ENCODE measurements at regions of chr10 and their contacts with region 1.

Region 1: DNA sequence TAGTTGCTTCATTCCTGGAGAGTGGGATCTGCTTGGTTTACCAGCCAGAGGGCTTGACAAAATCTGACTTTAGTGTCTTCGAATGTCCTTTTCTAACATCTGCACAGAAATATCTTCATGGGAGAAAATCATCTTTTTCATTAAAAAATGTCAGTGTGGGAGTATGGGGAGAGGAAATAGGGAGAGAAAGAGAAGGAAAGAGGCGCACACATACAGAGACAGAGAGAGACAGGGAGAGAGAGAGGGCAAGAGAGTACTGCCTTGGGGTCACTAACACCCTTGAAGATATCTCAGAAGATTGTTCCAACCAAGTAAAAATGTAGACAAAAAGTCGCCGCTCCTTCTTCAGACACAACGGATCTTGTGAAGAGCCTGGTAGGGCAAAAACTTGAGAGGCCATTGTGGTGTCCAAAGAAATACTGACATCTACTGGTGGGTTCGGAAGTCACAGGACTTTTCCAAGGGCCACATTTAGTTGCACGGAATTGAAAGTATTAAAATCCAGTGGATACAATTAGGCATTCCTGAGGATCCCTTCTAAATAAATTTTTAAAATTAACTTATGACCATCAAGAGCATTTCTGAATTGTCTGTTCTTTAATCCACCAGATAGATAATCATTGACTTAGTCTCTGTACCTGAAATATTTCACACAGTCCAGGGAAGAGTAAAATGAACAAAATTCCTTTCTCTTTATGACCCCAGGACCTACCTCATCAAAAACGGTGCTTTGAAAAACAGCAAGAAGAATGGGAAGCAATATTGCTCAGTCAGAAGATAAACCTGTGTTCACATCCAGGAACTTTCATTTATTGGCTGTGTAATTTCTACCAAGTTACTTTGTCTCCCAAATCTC is 29.7 kb downstream of the VIM start:
- DNase-seq: peak in 11 of 14 experiments; percentile 7 to 84 (median 38)
- ATAC-seq: peak; percentile 78
- H3K4me3 ChIP-seq: no peak overlapping the region
- H3K4me3 Mint-ChIP-seq: no peak overlapping the region
- H3K27ac ChIP-seq: no peak overlapping the region
- H3K27ac Mint-ChIP-seq: no peak overlapping the region
- H3K4me1 ChIP-seq: peaks cover 2% of the 10 kb centered on the region
- H3K4me1 Mint-ChIP-seq: peaks cover 7% of the 10 kb centered on the region
- H3K27me3 ChIP-seq: no peaks in the 10 kb centered on the region
- H3K27me3 Mint-ChIP-seq: no peaks in the 10 kb centered on the region
- CTCF ChIP-seq: peak; percentile 84

Region 2: DNA sequence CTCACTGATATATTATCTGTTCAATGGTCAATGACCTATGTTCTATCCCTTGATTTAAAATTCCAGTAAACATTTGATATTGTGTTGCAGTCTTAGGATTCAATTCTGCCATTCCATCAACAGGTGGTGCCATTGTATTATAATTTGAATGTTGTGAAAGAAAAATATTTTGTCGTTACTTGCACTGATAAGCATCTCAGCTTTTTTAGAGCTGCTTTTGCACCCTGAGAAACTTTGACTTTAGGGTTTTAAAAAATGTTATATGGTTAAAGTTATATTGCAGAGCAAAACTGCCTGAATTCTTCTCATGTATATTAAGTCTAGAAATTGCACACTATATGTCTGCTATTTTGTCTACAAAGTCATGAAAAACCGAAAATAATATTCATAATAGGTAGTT is 1378.6 kb before region 1 on chr10:
- CTCF ChIA-PET with region 1: no interaction called
- POLR2A ChIA-PET with region 1: no interaction called
- intact Hi-C with region 1: loop called in 1 of 2 experiments (anchors 10 kb)
- DNase-seq: peak in 3 of 14 experiments; percentile 43 to 47 (median 44)
- ATAC-seq: peak; percentile 61
- H3K4me3 ChIP-seq: no peak overlapping the region
- H3K4me3 Mint-ChIP-seq: no peak overlapping the region
- H3K27ac ChIP-seq: no peak overlapping the region
- H3K27ac Mint-ChIP-seq: no peak overlapping the region
- H3K4me1 ChIP-seq: no peaks in the 10 kb centered on the region
- H3K4me1 Mint-ChIP-seq: no peaks in the 10 kb centered on the region
- H3K27me3 ChIP-seq: peaks cover 0 to 12% of the 10 kb centered on the region in 2 experiments
- H3K27me3 Mint-ChIP-seq: peaks cover 79% of the 10 kb centered on the region
- CTCF ChIP-seq: peak; percentile 60

Region 3: GRCh38 chr10:16828114-16828568 is 429.6 kb before region 1 on chr10:
- CTCF ChIA-PET with region 1: interaction called, 5 read pairs
- POLR2A ChIA-PET with region 1: no interaction called
- intact Hi-C with region 1: loop called (anchors 1 kb)
- DNase-seq: peak; percentile 30 to 88 (median 51)
- ATAC-seq: peak; percentile 99
- H3K4me3 ChIP-seq: no peak overlapping the region
- H3K4me3 Mint-ChIP-seq: no peak overlapping the region
- H3K27ac ChIP-seq: no peak overlapping the region
- H3K27ac Mint-ChIP-seq: no peak overlapping the region
- H3K4me1 ChIP-seq: peaks cover 8% of the 10 kb centered on the region
- H3K4me1 Mint-ChIP-seq: peaks cover 7% of the 10 kb centered on the region
- H3K27me3 ChIP-seq: no peaks in the 10 kb centered on the region
- H3K27me3 Mint-ChIP-seq: no peaks in the 10 kb centered on the region
- CTCF ChIP-seq: peak; percentile 63

Region 4: GRCh38 chr10:16909961-16910792 is 347.5 kb before region 1 on chr10:
- CTCF ChIA-PET with region 1: interaction called, 3 read pairs
- POLR2A ChIA-PET with region 1: no interaction called
- intact Hi-C with region 1: loop called in 1 of 2 experiments (anchors 5 kb)
- DNase-seq: peak in 1 of 14 experiments; percentile 7
- ATAC-seq: no peak
- H3K4me3 ChIP-seq: no peak overlapping the region
- H3K4me3 Mint-ChIP-seq: no peak overlapping the region
- H3K27ac ChIP-seq: no peak overlapping the region
- H3K27ac Mint-ChIP-seq: no peak overlapping the region
- H3K4me1 ChIP-seq: no peaks in the 10 kb centered on the region
- H3K4me1 Mint-ChIP-seq: no peaks in the 10 kb centered on the region
- H3K27me3 ChIP-seq: no peaks in the 10 kb centered on the region
- H3K27me3 Mint-ChIP-seq: no peaks in the 10 kb centered on the region
- CTCF ChIP-seq: no peak

Region 5: GRCh38 chr10:17278607-17279240 is 21.0 kb after region 1 on chr10:
- CTCF ChIA-PET with region 1: no interaction called
- POLR2A ChIA-PET with region 1: no interaction called
- intact Hi-C with region 1: no loop called
- DNase-seq: no peak
- ATAC-seq: no peak
- H3K4me3 ChIP-seq: no peak overlapping the region
- H3K4me3 Mint-ChIP-seq: no peak overlapping the region
- H3K27ac ChIP-seq: no peak overlapping the region
- H3K27ac Mint-ChIP-seq: no peak overlapping the region
- H3K4me1 ChIP-seq: no peaks in the 10 kb centered on the region
- H3K4me1 Mint-ChIP-seq: no peaks in the 10 kb centered on the region
- H3K27me3 ChIP-seq: peaks cover 0 to 6% of the 10 kb centered on the region in 2 experiments
- H3K27me3 Mint-ChIP-seq: peaks cover 7% of the 10 kb centered on the region
- CTCF ChIP-seq: no peak